A673 (cell line): ENCODE measurements at regions of chr5 and their contacts with region 1.

Region 1: GRCh38 chr5:133111299-133111698 is 59.5 kb downstream of the HSPA4 start:
- DNase-seq: peak; percentile 84
- H3K4me3 ChIP-seq: no peak overlapping the region
- H3K27ac ChIP-seq: no peak overlapping the region
- H3K4me1 ChIP-seq: no peaks in the 10 kb centered on the region
- H3K27me3 ChIP-seq: no peaks in the 10 kb centered on the region
- CTCF ChIP-seq: peak; percentile 98

Region 2: DNA sequence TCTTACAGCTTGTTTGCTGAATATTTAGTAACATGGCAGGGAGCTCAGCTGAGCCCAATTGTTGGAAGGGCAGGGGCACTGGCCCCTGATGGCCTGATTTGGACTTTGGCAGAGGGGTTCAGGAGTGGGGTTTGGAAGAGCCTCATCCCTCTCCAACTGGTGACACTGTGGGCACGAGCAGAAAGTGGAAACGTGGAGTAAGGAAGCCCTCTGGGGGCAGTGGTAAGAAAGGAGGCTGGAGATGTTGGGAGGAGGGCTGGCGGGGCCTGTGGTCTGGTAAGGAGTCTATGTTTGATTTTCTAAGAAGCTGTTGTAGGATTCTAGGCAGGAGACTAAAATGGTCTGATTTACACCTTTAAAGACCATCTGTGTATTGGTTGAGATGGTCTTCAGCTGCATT is 149.4 kb after region 1 on chr5:
- CTCF ChIA-PET with region 1: interaction called, 3 read pairs
- POLR2A ChIA-PET with region 1: no interaction called
- intact Hi-C with region 1: loop called (anchors 5 kb)
- DNase-seq: no peak
- H3K4me3 ChIP-seq: no peak overlapping the region
- H3K27ac ChIP-seq: no peak overlapping the region
- H3K4me1 ChIP-seq: no peaks in the 10 kb centered on the region
- H3K27me3 ChIP-seq: no peaks in the 10 kb centered on the region
- CTCF ChIP-seq: 0 out of 2 replicates have a peak, but pooled peaks have one; percentile 18

Region 3: GRCh38 chr5:133287500-133287899 is 176.2 kb after region 1 on chr5:
- CTCF ChIA-PET with region 1: no interaction called
- POLR2A ChIA-PET with region 1: no interaction called
- intact Hi-C with region 1: loop called (anchors 1 kb)
- DNase-seq: no peak
- H3K4me3 ChIP-seq: no peak overlapping the region
- H3K27ac ChIP-seq: no peak overlapping the region
- H3K4me1 ChIP-seq: no peaks in the 10 kb centered on the region
- H3K27me3 ChIP-seq: no peaks in the 10 kb centered on the region
- CTCF ChIP-seq: peak; percentile 36; the same call in 1 of the 2 replicates

Region 4: GRCh38 chr5:133440467-133441115 is 329.3 kb after region 1 on chr5:
- CTCF ChIA-PET with region 1: no interaction called
- POLR2A ChIA-PET with region 1: no interaction called
- intact Hi-C with region 1: no loop called
- DNase-seq: no peak
- H3K4me3 ChIP-seq: no peak overlapping the region
- H3K27ac ChIP-seq: no peak overlapping the region
- H3K4me1 ChIP-seq: no peaks in the 10 kb centered on the region
- H3K27me3 ChIP-seq: no peaks in the 10 kb centered on the region
- CTCF ChIP-seq: no peak

Region 5: GRCh38 chr5:133460172-133460758 is 349.0 kb after region 1 on chr5:
- CTCF ChIA-PET with region 1: no interaction called
- POLR2A ChIA-PET with region 1: no interaction called
- intact Hi-C with region 1: loop called (anchors 2 kb)
- DNase-seq: peak; percentile 44
- H3K4me3 ChIP-seq: no peak overlapping the region
- H3K27ac ChIP-seq: no peak overlapping the region
- H3K4me1 ChIP-seq: no peaks in the 10 kb centered on the region
- H3K27me3 ChIP-seq: no peaks in the 10 kb centered on the region
- CTCF ChIP-seq: peak; percentile 91